Endothelial cell of umbilical vein (primary cell): ENCODE measurements at regions of chr17 and their contacts with region 1.

Region 1: DNA sequence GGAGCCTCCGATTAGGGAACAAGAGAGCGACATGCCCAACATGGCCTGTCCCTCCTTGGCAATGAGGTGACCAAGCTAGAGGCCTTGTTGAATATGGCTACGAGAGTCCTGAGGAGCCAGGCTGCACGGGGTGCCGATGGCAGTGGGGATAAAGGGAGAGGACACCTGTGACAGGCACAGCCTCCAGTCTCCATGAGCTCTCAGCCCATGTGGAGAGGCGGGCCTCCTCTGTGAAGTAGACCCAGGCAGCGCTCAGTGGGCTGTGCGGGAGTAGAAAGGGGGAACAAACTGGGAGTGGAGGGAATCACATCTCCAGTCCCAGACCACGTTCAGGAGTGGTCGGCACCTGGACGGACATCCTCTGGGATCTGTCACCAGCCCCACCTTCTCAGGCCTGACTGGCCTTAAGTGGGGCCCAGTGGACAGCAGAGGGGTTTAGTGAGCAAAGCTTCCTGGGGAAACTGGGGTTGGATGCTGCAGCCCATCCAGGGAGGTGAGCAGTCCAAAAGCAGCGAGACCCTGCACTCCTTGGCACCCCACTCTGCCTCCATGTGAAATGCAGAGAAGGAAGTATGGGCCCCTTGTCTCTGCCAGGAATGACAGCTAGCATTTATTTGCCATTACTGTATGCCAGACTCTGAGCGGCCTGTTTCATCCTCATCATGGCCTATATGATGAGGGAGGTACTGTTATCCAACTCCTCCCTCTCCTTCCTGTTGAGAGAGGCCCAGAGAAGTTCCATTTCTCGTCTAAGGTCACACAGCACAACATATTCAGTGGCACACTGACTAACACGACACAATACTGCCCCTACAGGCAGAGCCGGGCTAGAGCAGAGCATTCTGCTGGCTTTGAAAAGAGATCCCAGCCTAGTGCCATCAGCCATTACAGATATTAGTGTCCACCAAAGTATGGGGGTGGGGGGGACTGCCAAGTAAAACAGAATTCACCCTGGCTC is 4.5 kb upstream of the TMEM92 start:
- DNase-seq: peak; percentile 51
- H3K4me3 ChIP-seq: no peak overlapping the region
- H3K27ac ChIP-seq: no peak overlapping the region
- H3K4me1 ChIP-seq: peaks cover 9% of the 10 kb centered on the region
- H3K27me3 ChIP-seq: peaks cover 3 to 6% of the 10 kb centered on the region in 2 experiments
- CTCF ChIP-seq: peak; percentile 83 to 84
- POLR2A ChIP-seq: no peak

Region 2: DNA sequence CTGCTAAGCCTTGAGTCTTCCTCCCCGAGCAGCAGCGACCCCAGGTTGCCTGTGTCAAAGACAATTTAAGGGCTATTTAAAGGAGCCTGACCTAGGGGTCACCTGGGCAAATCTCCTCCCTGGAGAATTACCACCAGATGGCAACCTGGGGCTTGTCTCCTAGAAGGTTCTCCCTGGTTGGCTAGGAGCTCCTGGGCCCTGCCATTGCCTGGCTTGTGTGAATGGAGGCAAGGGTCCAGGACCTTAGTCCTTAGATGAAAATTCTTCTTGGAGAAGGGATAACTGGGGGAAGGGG is 370.6 kb before region 1 on chr17:
- CTCF ChIA-PET with region 1: no interaction called
- POLR2A ChIA-PET with region 1: no interaction called
- dilution Hi-C with region 1: no loop called
- intact Hi-C with region 1: no loop called
- DNase-seq: peak; percentile 9
- H3K4me3 ChIP-seq: no peak overlapping the region
- H3K27ac ChIP-seq: no peak overlapping the region
- H3K4me1 ChIP-seq: no peaks in the 10 kb centered on the region
- H3K27me3 ChIP-seq: peaks cover 41 to 50% of the 10 kb centered on the region in 2 experiments
- CTCF ChIP-seq: peak in 1 of 2 donors; percentile 28
- POLR2A ChIP-seq: no peak

Region 3: GRCh38 chr17:49926886-49927285 is 342.9 kb before region 1 on chr17:
- CTCF ChIA-PET with region 1: no interaction called
- POLR2A ChIA-PET with region 1: no interaction called
- dilution Hi-C with region 1: no loop called
- intact Hi-C with region 1: no loop called
- DNase-seq: no peak
- H3K4me3 ChIP-seq: no peak overlapping the region
- H3K27ac ChIP-seq: no peak overlapping the region
- H3K4me1 ChIP-seq: no peaks in the 10 kb centered on the region
- H3K27me3 ChIP-seq: peaks cover 0 to 3% of the 10 kb centered on the region in 2 experiments
- CTCF ChIP-seq: no peak
- POLR2A ChIP-seq: no peak

Region 4: GRCh38 chr17:50169121-50169764 is 100.5 kb before region 1 on chr17:
- CTCF ChIA-PET with region 1: interaction called, 13 read pairs
- POLR2A ChIA-PET with region 1: no interaction called
- dilution Hi-C with region 1: no loop called
- intact Hi-C with region 1: no loop called
- DNase-seq: peak; percentile 65
- H3K4me3 ChIP-seq: no peak overlapping the region
- H3K27ac ChIP-seq: no peak overlapping the region
- H3K4me1 ChIP-seq: peaks cover 5% of the 10 kb centered on the region
- H3K27me3 ChIP-seq: no peaks in the 10 kb centered on the region
- CTCF ChIP-seq: peak; percentile 78 to 88
- POLR2A ChIP-seq: no peak

Region 5: DNA sequence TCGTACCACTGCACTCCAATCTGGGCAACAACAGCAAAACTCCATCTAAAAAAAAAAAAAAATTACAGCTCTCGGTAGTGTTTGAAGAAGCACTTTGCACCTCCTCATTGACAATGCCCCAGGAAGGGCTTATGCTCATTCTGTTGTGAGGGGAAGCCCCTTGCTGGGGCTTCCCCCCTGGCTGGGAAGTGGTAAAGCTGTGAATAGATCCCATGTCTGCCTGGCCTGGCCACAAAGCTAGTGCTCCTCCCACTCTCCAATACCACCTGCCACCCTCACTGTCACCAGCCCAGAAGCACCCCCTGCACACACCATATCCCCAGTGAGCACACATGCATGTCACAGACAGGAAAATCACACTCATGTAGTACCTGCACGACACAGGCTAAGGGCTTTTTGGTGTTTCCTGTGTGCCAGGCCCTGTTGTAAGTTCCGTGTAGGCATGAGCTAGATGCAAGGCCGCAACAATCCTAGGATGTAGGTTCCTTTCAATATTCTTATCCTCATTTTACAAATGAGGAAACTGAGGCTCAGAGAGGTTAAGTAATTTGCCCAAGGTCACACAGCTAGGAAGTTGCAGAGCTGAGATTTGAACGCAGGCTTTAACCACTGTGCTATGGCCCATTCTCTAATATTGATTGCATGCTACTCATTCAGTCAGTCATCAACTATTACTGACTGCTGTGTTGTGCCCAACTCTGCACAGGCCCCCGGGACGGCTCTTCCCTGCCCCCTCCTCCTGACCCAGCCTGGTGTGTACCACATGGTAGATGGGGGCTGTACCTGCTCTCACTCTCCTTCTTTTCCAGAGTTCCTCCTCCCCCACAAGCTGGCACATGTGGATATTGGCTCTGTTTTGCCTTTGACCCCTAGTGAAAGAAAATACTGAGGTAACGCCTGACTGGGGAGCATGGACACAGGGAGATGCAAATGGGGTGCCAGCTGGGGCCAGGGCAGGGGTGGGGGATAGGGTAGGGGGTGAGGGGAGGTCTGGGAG is 56.4 kb before region 1 on chr17:
- CTCF ChIA-PET with region 1: interaction called, 17 read pairs
- POLR2A ChIA-PET with region 1: no interaction called
- dilution Hi-C with region 1: no loop called
- intact Hi-C with region 1: loop called (anchors 2 kb)
- DNase-seq: no peak
- H3K4me3 ChIP-seq: no peak overlapping the region
- H3K27ac ChIP-seq: no peak overlapping the region
- H3K4me1 ChIP-seq: peaks cover 7% of the 10 kb centered on the region
- H3K27me3 ChIP-seq: peaks cover 17 to 18% of the 10 kb centered on the region in 2 experiments
- CTCF ChIP-seq: no peak
- POLR2A ChIP-seq: no peak

Region 6: DNA sequence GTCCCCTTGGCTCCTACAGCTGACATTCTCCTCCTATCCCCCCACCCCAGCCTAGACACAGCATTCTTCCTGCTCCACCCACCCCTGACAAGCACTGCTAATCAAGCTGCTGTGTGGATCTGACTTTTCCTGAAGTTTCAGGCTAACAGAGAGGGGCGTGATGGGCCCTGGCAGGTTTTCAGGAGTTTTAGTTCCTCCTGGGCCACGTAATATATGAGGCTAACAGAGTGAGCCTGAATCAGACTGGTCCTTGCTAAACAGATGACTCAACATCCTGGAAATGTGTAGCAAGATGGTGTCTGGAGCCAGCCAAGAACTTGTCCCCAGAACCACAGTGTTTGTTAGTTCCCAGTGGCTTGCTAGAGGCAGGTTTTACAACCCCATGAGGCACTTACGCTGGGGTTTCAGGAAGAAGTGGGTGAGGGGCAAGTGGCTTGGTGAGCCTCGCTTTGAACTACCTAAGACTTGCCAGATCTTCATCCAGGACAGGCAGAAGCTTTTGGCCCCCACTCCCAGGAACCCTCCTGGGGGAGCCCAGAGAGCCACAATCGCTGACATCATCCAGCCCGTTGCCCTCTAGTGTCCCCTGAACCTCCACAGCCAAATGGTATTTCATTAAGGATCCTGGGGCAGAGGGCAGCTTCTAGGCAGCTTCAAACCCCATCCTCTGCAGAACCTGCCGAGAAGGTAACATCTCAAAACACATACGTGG is 20.4 kb after region 1 on chr17:
- CTCF ChIA-PET with region 1: interaction called, 20 read pairs
- POLR2A ChIA-PET with region 1: no interaction called
- dilution Hi-C with region 1: no loop called
- intact Hi-C with region 1: no loop called
- DNase-seq: peak; percentile 90
- H3K4me3 ChIP-seq: no peak overlapping the region
- H3K27ac ChIP-seq: peak overlapping the region; percentile 83
- H3K4me1 ChIP-seq: peaks cover 15% of the 10 kb centered on the region
- H3K27me3 ChIP-seq: no peaks in the 10 kb centered on the region
- CTCF ChIP-seq: no peak
- POLR2A ChIP-seq: peak; percentile 21

Region 7: DNA sequence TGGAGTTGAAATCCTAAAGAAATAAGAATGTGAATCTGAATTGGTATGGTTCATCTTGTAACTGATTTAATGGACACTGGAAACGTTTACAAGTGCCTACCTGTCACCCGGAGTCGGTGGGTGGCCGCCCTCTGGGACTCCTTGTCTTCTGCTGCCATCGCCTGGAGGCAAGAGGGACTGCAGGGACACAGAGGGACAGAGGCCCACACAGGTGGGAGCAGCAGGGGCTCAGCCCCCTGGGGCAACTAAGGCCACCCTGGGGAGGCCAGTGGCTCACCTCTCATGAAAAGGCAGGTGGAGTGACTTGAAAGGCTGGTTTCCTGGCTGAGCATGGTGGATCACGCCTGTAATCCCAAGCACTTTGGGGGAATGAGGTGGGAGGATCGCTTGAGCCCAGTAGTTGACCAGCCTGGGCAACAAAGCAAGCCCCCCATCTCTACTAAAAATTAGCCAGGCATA is 27.7 kb after region 1 on chr17:
- CTCF ChIA-PET with region 1: interaction called, 27 read pairs
- POLR2A ChIA-PET with region 1: no interaction called
- dilution Hi-C with region 1: no loop called
- intact Hi-C with region 1: loop called (anchors 1 kb)
- DNase-seq: peak; percentile 56
- H3K4me3 ChIP-seq: no peak overlapping the region
- H3K27ac ChIP-seq: no peak overlapping the region
- H3K4me1 ChIP-seq: no peaks in the 10 kb centered on the region
- H3K27me3 ChIP-seq: no peaks in the 10 kb centered on the region
- CTCF ChIP-seq: peak; percentile 88 to 91
- POLR2A ChIP-seq: no peak

Region 8: GRCh38 chr17:50312308-50312707 is 42.6 kb after region 1 on chr17:
- CTCF ChIA-PET with region 1: no interaction called
- POLR2A ChIA-PET with region 1: no interaction called
- dilution Hi-C with region 1: no loop called
- intact Hi-C with region 1: no loop called
- DNase-seq: no peak
- H3K4me3 ChIP-seq: no peak overlapping the region
- H3K27ac ChIP-seq: no peak overlapping the region
- H3K4me1 ChIP-seq: no peaks in the 10 kb centered on the region
- H3K27me3 ChIP-seq: peaks cover 16% of the 10 kb centered on the region in 2 experiments
- CTCF ChIP-seq: no peak
- POLR2A ChIP-seq: no peak